Common myeloid progenitor, CD34-positive (primary cell): ENCODE measurements at regions of chr1 and their contacts with region 1.

Region 1: GRCh38 chr1:202586018-202586821 is 124.0 kb downstream of the SYT2 start:
- DNase-seq: peak; percentile 14 to 66 (median 58)
- H3K4me3 ChIP-seq: no peak overlapping the region
- H3K27ac ChIP-seq: no peak overlapping the region
- H3K4me1 ChIP-seq: peaks cover 0 to 4% (median 0%) of the 10 kb centered on the region in 4 experiments
- H3K27me3 ChIP-seq: no peaks in the 10 kb centered on the region

Region 2: GRCh38 chr1:202571347-202572339 is 14.6 kb before region 1 on chr1:
- CTCF ChIA-PET with region 1: interaction called, 12 read pairs
- POLR2A ChIA-PET with region 1: no interaction called
- DNase-seq: peak; percentile 30 to 64 (median 61)
- H3K4me3 ChIP-seq: no peak overlapping the region
- H3K27ac ChIP-seq: no peak overlapping the region
- H3K4me1 ChIP-seq: no peaks in the 10 kb centered on the region
- H3K27me3 ChIP-seq: no peaks in the 10 kb centered on the region